Head of caudate nucleus (tissue), 42 donors: ENCODE measurements at regions of chr7 and their contacts with region 1.

Region 1: GRCh38 chr7:4641667-4642467 is 40.2 kb upstream of the FOXK1 start:
- DNase-seq: peak; percentile 60 to 94 (median 86)

Region 2: GRCh38 chr7:4681886-4682620 is 40.2 kb after region 1 on chr7 and contains the start of gene FOXK1:
- intact Hi-C with region 1: loop called (anchors 2 kb)
- DNase-seq: peak in 41 of 42 donors; percentile 19 to 90 (median 81)